PC-3 (cell line): ENCODE measurements at regions of chr14 and their contacts with region 1.

Region 1: GRCh38 chr14:22099942-22100763 is 426.5 kb upstream of the OR4E1 start:
- DNase-seq: peak; percentile 86
- ATAC-seq: peak; percentile 100
- H3K4me3 ChIP-seq: no peak overlapping the region
- H3K27ac ChIP-seq: no peak overlapping the region
- H3K4me1 ChIP-seq: no peaks in the 10 kb centered on the region
- H3K27me3 ChIP-seq: peaks cover 32% of the 10 kb centered on the region
- CTCF ChIP-seq: peak; percentile 95

Region 2: DNA sequence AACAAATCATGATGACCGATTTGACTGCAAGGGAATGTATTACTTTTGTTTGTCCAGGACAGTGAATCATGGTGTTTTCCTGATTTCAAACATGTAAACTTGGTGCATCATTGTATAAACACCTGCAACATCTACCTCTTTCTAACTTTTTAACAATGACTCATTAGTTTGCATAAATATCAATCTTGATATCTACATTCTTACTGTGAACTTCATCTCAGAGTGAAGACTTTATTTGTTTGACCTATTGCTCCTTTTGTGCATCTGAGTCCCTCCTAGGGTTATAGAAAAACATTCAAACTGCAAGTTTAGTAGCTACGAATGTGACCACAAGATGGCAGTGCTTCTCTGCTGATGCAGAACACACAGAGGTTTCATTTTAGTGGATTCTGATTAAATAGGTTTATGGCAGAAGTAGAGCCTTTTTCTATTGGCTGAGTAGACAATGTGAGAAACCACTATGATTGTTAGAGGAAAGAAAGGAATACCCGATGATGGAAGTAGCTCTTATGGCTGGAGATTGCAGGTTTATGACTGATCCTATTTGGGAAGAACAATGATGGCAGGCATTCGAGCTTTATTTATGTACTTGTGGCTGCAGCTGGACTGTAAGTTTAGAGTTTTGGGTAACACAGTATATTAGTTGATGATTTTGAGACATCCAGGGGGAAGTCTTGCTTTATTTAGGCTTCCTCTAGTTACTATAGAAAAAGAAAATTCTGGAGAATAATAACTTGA is 182.3 kb before region 1 on chr14:
- CTCF ChIA-PET with region 1: interaction called, 6 read pairs
- POLR2A ChIA-PET with region 1: no interaction called
- intact Hi-C with region 1: loop called (anchors 5 kb)
- DNase-seq: peak; percentile 95
- ATAC-seq: peak; percentile 72
- H3K4me3 ChIP-seq: peak overlapping the region; percentile 48; the same call in 1 of the 2 replicates
- H3K27ac ChIP-seq: peak overlapping the region; percentile 79; the same call in 1 of the 2 replicates
- H3K4me1 ChIP-seq: peaks cover 46% of the 10 kb centered on the region
- H3K27me3 ChIP-seq: peaks cover 3% of the 10 kb centered on the region
- CTCF ChIP-seq: peak; percentile 96

Region 3: DNA sequence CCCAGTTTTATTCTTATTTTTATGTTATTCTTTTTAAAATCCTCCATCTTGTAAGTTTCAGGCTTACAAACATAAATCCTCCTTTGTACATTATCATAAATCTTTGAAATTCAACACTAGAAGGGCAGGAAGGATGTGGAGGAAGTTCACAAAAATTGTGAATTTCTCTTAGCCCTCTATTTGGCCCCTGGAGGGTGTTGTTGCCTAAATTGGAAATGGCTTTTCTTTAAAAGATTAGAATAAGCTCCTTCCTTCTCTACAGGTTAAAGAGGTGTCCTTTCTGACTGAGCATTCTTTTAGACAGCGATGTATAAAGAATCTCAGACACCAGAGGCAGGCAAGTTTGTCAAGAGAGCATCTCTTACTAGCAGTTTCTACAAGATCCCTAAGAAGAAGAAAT is 34.8 kb before region 1 on chr14:
- CTCF ChIA-PET with region 1: no interaction called
- POLR2A ChIA-PET with region 1: no interaction called
- intact Hi-C with region 1: no loop called
- DNase-seq: no peak
- ATAC-seq: no peak
- H3K4me3 ChIP-seq: no peak overlapping the region
- H3K27ac ChIP-seq: no peak overlapping the region
- H3K4me1 ChIP-seq: no peaks in the 10 kb centered on the region
- H3K27me3 ChIP-seq: peaks cover 48% of the 10 kb centered on the region
- CTCF ChIP-seq: no peak

Region 4: GRCh38 chr14:22084393-22085281 is 15.5 kb before region 1 on chr14:
- CTCF ChIA-PET with region 1: interaction called, 31 read pairs
- POLR2A ChIA-PET with region 1: no interaction called
- intact Hi-C with region 1: loop called (anchors 1 kb)
- DNase-seq: peak; percentile 81
- ATAC-seq: peak; percentile 53; the same call in 1 of the 2 replicates
- H3K4me3 ChIP-seq: no peak overlapping the region
- H3K27ac ChIP-seq: no peak overlapping the region
- H3K4me1 ChIP-seq: peaks cover 13% of the 10 kb centered on the region
- H3K27me3 ChIP-seq: peaks cover 26% of the 10 kb centered on the region
- CTCF ChIP-seq: peak; percentile 83